GM10248 (cell line): ENCODE measurements at regions of chr17 and their contacts with region 1.

Region 1: DNA sequence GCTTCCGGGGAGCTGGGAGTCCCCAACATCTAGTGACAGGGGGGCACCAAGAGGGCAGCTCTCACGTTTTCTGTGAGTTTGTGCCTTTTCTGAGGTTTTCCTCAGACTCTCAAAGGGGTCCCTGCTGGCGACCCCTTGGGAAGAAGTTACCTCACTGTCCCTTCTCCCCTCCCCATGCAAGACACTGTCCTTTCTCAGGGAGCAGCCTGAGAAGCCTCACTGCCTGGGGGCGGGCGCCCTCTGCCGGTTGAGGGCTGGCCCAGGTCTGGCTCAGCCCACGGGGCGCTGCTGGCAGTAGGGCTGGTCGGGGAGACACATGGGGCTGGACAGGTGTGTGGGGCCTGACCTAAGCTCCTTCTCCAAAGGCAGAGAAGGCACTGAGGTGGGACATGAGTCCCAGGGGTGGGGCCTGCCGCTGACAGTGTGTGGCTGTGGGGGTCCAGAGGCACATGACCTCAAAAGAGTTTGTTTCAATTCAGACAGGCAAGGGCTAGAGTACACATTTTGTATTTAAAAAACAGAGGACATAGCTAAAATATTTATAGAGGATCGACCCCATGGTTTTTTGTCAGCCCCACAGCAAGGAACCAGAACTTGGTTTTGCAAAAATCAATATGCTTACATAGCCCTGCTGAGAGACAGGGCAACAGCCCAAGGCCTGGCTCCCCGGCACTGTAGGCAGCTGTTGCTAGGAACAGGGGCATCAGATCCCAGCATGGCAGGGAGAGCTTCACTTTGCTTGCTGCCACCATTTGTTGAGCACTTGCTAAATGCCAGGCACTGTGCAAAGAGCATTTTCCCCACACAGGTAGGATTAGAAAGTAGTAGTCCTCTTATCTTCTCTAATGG is 18.5 kb upstream of the ALDH3A1 start:
- DNase-seq: peak; percentile 87
- CTCF ChIP-seq: peak; percentile 99

Region 2: GRCh38 chr17:19306160-19307111 is 460.2 kb before region 1 on chr17:
- CTCF ChIA-PET with region 1: no interaction called
- POLR2A ChIA-PET with region 1: no interaction called
- DNase-seq: peak; percentile 73
- CTCF ChIP-seq: no peak

Region 3: DNA sequence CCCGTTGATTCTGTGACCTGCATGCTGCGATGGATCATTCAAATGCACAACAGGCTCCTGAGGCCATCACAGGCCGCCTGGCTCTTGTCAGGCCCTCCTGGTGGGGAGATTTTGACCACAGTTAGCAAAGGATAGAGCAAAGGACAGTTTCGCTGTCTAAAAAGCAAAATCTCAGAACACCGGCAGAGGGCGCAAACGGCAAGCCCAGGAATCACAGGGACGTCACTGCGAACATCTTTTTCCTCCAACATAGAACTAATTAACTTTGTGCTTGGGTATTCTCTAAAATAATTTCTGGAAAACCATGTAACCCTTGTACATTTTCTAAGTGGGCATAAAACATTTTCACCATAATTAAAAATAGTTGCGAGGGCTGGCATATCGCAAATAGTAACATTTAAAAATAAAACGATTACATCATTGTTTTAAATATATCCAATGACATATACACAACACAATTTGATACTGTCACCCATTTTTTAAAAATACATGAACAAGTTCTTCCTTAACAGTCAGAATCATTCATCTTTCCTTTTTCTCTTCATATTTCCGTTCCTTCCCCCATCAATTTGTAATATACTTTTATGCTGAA is 252.7 kb before region 1 on chr17:
- CTCF ChIA-PET with region 1: interaction called, 77 read pairs
- POLR2A ChIA-PET with region 1: no interaction called
- DNase-seq: peak; percentile 68
- CTCF ChIP-seq: peak; percentile 87

Region 4: DNA sequence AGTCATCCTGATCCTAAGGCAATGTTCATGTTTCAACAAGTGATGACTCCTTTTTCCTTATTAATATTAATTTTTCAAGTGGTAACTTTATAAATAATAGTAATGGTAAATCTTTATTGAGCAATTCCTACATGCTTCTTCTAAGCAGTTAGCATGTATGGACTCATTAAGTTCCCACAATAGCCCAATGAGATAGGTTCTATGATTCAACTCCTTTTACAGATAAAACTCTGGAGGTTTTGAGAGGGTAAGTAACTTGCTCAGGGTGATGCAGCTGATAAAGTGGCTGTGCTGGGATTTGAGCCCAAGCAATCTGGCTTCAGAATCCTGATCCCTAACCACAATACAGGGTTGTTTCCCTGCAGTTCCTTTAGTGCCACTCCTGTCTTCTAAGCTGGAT is 207.7 kb before region 1 on chr17:
- CTCF ChIA-PET with region 1: no interaction called
- POLR2A ChIA-PET with region 1: no interaction called
- DNase-seq: no peak
- CTCF ChIP-seq: no peak

Region 5: GRCh38 chr17:19656851-19657581 is 109.6 kb before region 1 on chr17:
- CTCF ChIA-PET with region 1: interaction called, 11 read pairs
- POLR2A ChIA-PET with region 1: no interaction called
- DNase-seq: no peak
- CTCF ChIP-seq: no peak

Region 6: DNA sequence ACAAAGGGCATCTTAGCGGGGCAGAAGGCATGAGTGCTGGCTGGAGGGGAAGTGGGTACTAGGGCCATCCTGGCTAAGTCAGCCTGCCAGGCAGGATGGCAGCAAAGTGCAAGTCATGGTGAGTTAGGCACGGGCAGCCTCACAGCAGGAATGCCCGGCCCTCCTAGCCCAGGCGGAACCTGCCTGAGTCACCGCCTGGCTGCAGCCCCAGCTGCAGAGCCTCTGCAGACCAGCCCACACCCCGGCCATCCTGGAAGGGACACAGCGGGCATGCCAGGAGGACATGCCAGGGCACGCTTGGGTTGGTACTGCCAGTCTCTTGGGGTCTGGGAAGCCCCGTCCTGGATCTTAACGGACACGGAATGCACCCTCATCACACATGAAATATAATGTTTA is 13.6 kb before region 1 on chr17:
- CTCF ChIA-PET with region 1: interaction called, 162 read pairs
- POLR2A ChIA-PET with region 1: no interaction called
- DNase-seq: no peak
- CTCF ChIP-seq: no peak